ENCODE measurements at regions of chrX and their contacts with region 1.

Region 1: GRCh38 chrX:109578916-109579315 is 42.3 kb downstream of the NXT2 start:
- DNase-seq: no peak
- H3K4me3 Mint-ChIP-seq: no peak overlapping the region
- H3K27ac Mint-ChIP-seq: no peak overlapping the region
- H3K4me1 Mint-ChIP-seq: no peaks in the 10 kb centered on the region
- H3K27me3 Mint-ChIP-seq: peaks cover 82% of the 10 kb centered on the region
- CTCF ChIP-seq: no peak

Region 2: DNA sequence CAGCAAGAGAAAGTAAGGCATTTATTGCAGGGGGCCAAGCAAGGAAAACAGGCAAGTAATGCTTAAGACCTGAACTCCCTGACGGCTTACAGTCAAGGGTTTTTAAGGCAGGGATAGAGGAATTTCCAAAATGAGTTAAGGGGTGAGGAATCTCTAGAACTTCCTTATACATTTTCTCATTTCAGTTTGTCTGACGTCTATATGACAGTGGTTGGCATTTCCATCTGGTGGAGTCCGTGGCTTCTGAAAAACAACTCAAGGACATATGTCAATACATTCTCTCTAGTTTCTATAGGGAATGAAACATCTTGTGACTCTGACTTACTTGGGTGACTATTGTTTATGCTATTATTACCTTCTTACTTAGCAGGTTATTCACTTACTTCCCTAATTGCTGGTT is 77.7 kb before region 1 on chrX:
- CTCF ChIA-PET with region 1: no interaction called
- POLR2A ChIA-PET with region 1: no interaction called
- intact Hi-C with region 1: loop called (anchors 10 kb)
- DNase-seq: no peak
- H3K4me3 Mint-ChIP-seq: no peak overlapping the region
- H3K27ac Mint-ChIP-seq: no peak overlapping the region
- H3K4me1 Mint-ChIP-seq: no peaks in the 10 kb centered on the region
- H3K27me3 Mint-ChIP-seq: peaks cover 87% of the 10 kb centered on the region
- CTCF ChIP-seq: no peak

Region 3: GRCh38 chrX:109600237-109600651 is 21.3 kb after region 1 on chrX:
- CTCF ChIA-PET with region 1: no interaction called
- POLR2A ChIA-PET with region 1: no interaction called
- intact Hi-C with region 1: no loop called
- DNase-seq: no peak
- H3K4me3 Mint-ChIP-seq: no peak overlapping the region
- H3K27ac Mint-ChIP-seq: no peak overlapping the region
- H3K4me1 Mint-ChIP-seq: no peaks in the 10 kb centered on the region
- H3K27me3 Mint-ChIP-seq: peaks cover 70% of the 10 kb centered on the region
- CTCF ChIP-seq: no peak

Region 4: DNA sequence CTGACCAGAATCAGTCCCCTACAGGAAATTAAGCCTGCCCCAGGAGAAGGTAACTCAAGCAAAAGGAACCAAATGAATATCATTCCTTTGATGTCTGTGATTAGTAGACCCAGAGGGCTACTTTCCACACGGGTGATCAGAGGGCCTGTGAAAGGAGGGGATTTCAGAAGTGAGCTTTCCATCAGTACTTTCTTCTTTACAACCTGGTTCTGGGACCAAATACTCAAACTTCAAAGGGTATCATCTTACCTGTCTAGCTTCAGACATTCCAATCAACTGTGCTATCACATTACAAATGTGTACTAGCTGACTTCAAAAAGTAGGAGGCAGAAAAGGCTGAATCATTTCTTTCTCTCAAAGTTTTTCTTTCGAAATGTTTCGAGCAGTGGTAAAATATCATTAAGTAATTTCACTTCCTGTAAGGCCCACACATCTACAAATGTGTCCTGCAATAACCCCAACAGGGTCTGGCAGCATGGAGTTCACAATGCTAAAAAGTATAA is 130.3 kb after region 1 on chrX:
- CTCF ChIA-PET with region 1: no interaction called
- POLR2A ChIA-PET with region 1: no interaction called
- intact Hi-C with region 1: no loop called
- DNase-seq: peak; percentile 58
- H3K4me3 Mint-ChIP-seq: no peak overlapping the region
- H3K27ac Mint-ChIP-seq: peak overlapping the region; percentile 42
- H3K4me1 Mint-ChIP-seq: peaks cover 10% of the 10 kb centered on the region
- H3K27me3 Mint-ChIP-seq: peaks cover 14% of the 10 kb centered on the region
- CTCF ChIP-seq: no peak

Measured in MCF 10A (cell line).